Colonic mucosa (tissue), 4 donors: ENCODE measurements at regions of chr12 and their contacts with region 1.

Region 1: DNA sequence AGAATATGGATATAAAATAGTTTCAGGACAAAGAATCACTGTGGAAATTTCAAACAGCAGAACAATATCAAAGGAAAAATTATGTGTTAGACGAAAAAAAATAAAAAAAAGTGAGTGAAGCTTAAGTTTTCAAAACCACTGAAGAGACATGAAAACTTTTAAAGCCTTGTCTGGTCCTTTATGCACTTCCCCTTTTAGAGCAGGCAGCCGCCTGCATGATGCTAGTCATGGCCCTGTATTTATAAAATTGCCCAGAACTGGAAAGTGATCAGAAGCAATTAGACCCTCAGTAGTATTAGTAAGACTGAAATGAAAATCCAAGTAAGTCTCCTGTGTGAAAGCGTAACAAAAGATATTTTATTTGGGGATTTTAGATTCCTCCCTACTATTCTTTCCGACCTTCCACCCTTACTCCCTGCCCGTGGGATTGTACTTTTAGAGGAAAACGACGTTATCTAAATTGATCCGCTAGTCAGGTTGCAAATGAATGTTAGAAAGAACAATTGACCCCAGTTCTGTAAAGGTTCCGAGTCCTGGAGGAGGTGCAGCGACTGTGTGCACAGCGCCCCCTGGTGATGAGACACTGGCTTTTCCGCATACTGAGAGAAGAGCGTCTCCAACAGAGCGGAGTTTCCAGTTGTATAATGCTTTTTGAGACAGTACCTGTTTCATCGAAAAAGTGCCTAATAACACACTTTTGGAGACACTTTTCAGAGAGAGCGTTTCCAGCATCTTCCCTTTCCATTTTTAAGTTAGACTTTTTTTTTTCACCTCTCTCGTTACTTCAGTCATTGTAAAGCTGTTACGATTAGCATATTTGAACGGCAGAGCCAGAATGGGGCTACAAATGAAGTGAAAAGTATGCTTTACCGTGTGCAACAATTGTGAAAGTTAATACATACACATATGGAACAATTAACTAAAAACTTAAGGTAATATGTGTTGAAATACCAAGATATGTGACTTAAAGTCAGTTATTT is 12.4 kb downstream of the MGST1 start:
- DNase-seq: peak; percentile 74
- H3K4me3 ChIP-seq: no peak overlapping the region
- H3K27ac ChIP-seq: no peak overlapping the region
- H3K4me1 ChIP-seq: no peaks in the 10 kb centered on the region
- H3K27me3 ChIP-seq: no peaks in the 10 kb centered on the region
- CTCF ChIP-seq: peak; percentile 62

Region 2: DNA sequence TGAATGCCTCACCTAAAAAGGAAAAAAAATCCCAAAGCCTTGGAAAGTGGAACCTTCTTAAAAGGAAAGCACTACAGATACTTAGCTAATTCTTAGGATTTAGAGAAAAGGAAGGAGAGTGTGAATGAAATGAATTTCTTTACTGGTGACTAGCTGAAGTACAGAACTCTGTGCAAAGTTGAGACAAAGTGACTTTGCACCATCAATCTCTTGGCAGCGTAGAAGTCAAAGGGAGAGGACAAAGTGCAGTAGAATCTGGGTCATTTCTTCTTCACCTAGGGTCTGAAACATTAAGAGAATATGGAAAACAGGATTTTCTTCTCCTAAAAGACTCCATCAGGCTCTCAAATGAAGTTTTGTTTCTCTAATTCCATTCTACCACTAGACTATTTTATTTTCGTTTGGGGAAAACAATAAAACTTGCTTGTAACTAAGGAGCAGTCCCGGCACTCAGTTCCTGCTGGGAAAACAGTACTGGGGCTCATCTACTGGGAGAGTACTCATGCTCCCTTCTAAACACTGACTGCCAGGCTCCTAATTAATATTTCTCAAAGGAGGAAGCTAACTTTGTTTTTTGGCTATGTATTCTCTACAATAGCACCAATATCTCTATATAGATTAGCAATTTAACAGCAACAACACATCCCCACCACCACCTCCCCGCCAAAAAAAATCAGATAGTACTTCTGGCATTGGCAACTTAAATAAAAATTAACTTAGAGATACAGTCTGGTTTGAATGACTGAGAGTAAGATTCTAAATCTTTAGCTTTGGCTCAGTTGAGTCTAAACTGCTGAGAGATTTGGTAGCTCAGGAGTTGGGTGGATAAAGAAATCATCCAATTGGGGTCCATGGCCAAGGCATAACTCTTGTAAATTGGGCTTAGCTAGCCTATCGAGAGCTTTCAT is 193.0 kb before region 1 on chr12:
- intact Hi-C with region 1: loop called (anchors 2 kb)
- DNase-seq: no peak
- H3K4me3 ChIP-seq: no peak overlapping the region
- H3K27ac ChIP-seq: no peak overlapping the region
- H3K4me1 ChIP-seq: no peaks in the 10 kb centered on the region
- H3K27me3 ChIP-seq: no peaks in the 10 kb centered on the region
- CTCF ChIP-seq: no peak

Region 3: GRCh38 chr12:16189849-16190248 is 170.0 kb before region 1 on chr12:
- intact Hi-C with region 1: loop called (anchors 5 kb)
- DNase-seq: no peak
- H3K4me3 ChIP-seq: no peak overlapping the region
- H3K27ac ChIP-seq: no peak overlapping the region
- H3K4me1 ChIP-seq: no peaks in the 10 kb centered on the region
- H3K27me3 ChIP-seq: no peaks in the 10 kb centered on the region
- CTCF ChIP-seq: no peak

Region 4: GRCh38 chr12:16807731-16808130 is 447.9 kb after region 1 on chr12:
- intact Hi-C with region 1: no loop called
- DNase-seq: no peak
- H3K4me3 ChIP-seq: no peak overlapping the region
- H3K27ac ChIP-seq: no peak overlapping the region
- H3K4me1 ChIP-seq: no peaks in the 10 kb centered on the region
- H3K27me3 ChIP-seq: no peaks in the 10 kb centered on the region
- CTCF ChIP-seq: no peak